Activated B cell treated with CpG ODN at 0.5 μM for 24 hours (primary cell): ENCODE measurements at regions of chr12 and their contacts with region 1.

Region 1: GRCh38 chr12:4148418-4149056 is 125.0 kb upstream of the CCND2 start:
- DNase-seq: peak; percentile 80
- ATAC-seq: peak; percentile 83
- H3K4me3 Mint-ChIP-seq: peak overlapping the region; percentile 75
- H3K27ac Mint-ChIP-seq: peak overlapping the region; percentile 92
- H3K4me1 Mint-ChIP-seq: peaks cover 95% of the 10 kb centered on the region
- H3K27me3 Mint-ChIP-seq: no peaks in the 10 kb centered on the region
- CTCF ChIP-seq: no peak

Region 2: GRCh38 chr12:2924019-2924418 is 1224.5 kb before region 1 on chr12:
- CTCF ChIA-PET with region 1: no interaction called
- POLR2A ChIA-PET with region 1: no interaction called
- intact Hi-C with region 1: no loop called
- DNase-seq: no peak
- ATAC-seq: no peak
- H3K4me3 Mint-ChIP-seq: no peak overlapping the region
- H3K27ac Mint-ChIP-seq: no peak overlapping the region
- H3K4me1 Mint-ChIP-seq: no peaks in the 10 kb centered on the region
- H3K27me3 Mint-ChIP-seq: no peaks in the 10 kb centered on the region
- CTCF ChIP-seq: no peak

Region 3: DNA sequence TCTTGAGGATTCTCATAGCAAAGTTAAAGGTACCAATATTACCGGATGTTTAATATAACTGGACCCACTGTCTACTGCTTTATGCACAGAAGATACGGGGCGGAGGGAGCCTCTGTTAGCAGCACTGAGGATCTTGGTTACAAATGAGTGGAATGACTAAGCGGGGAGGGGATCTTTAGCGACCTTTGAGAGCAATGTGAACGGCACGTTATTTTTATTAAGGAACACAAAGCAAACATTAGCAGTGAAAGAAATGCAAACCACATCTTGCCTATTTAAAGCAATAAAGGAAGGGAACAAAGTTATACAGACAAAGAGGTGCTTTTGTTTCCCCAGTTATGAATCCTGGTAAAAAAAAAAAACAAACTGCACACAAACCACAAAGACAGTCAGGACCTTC is 684.6 kb before region 1 on chr12:
- CTCF ChIA-PET with region 1: no interaction called
- POLR2A ChIA-PET with region 1: no interaction called
- intact Hi-C with region 1: no loop called
- DNase-seq: no peak
- ATAC-seq: no peak
- H3K4me3 Mint-ChIP-seq: no peak overlapping the region
- H3K27ac Mint-ChIP-seq: no peak overlapping the region
- H3K4me1 Mint-ChIP-seq: no peaks in the 10 kb centered on the region
- H3K27me3 Mint-ChIP-seq: peaks cover 20% of the 10 kb centered on the region
- CTCF ChIP-seq: no peak

Region 4: GRCh38 chr12:4118017-4118510 is 30.5 kb before region 1 on chr12:
- CTCF ChIA-PET with region 1: interaction called, 4 read pairs
- POLR2A ChIA-PET with region 1: interaction called, 45 read pairs
- intact Hi-C with region 1: loop called (anchors 1 kb)
- DNase-seq: no peak
- ATAC-seq: peak; percentile 80
- H3K4me3 Mint-ChIP-seq: peak overlapping the region; percentile 69
- H3K27ac Mint-ChIP-seq: peak overlapping the region; percentile 81
- H3K4me1 Mint-ChIP-seq: peaks cover 56% of the 10 kb centered on the region
- H3K27me3 Mint-ChIP-seq: no peaks in the 10 kb centered on the region
- CTCF ChIP-seq: no peak

Region 5: DNA sequence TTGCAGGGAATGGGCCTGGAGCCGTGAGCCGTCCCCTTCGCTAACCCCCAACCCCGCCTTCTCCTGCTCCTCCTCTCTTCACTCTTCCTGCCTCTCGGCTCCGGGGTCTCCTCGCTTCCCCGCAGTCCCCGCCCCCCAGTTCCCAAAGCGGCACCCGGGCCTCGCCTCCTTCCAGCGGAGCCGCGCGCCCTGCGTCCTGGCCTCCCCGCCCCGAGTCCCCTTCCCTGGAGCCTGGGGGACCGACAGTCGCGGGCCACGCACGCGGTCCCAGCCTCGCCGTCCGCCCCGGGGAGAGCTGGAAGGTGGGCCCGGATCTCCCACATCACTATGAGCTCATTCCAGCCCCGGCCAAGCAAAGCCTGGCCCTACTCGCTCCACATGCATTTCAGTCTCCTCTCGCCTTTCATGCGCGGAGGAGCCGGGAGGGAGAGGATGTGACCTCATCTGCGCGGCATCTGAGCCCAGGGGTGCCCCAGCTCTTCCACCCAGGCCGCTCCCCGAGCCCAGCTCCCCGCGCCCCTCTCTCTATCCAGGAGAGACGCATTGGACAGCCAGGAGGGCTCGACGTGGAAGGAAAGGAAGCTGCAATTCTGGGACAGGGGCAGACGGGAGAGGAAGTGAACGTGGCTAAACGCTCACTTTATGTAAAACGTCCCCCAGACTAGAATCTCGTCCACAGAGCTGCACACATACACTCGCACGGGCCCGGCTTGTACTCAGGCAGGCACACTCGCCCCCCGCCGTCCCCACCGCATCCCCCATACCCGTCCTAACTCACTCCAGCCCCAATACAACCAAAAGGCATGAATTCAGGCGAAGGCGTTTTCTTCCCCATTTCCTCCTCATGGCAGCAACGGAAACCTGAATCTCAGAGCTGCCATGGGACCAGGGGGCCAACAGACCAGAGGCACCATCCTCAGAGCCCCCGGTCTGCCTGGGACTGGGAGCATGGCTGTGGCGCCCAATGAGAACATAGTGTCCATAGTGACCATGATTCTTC is 16.3 kb after region 1 on chr12:
- CTCF ChIA-PET with region 1: interaction called, 4 read pairs
- POLR2A ChIA-PET with region 1: interaction called, 114 read pairs
- intact Hi-C with region 1: loop called (anchors 1 kb)
- DNase-seq: peak; percentile 60
- ATAC-seq: peak; percentile 75
- H3K4me3 Mint-ChIP-seq: peak overlapping the region; percentile 89
- H3K27ac Mint-ChIP-seq: peak overlapping the region; percentile 95
- H3K4me1 Mint-ChIP-seq: peaks cover 42% of the 10 kb centered on the region
- H3K27me3 Mint-ChIP-seq: no peaks in the 10 kb centered on the region
- CTCF ChIP-seq: no peak

Region 6: DNA sequence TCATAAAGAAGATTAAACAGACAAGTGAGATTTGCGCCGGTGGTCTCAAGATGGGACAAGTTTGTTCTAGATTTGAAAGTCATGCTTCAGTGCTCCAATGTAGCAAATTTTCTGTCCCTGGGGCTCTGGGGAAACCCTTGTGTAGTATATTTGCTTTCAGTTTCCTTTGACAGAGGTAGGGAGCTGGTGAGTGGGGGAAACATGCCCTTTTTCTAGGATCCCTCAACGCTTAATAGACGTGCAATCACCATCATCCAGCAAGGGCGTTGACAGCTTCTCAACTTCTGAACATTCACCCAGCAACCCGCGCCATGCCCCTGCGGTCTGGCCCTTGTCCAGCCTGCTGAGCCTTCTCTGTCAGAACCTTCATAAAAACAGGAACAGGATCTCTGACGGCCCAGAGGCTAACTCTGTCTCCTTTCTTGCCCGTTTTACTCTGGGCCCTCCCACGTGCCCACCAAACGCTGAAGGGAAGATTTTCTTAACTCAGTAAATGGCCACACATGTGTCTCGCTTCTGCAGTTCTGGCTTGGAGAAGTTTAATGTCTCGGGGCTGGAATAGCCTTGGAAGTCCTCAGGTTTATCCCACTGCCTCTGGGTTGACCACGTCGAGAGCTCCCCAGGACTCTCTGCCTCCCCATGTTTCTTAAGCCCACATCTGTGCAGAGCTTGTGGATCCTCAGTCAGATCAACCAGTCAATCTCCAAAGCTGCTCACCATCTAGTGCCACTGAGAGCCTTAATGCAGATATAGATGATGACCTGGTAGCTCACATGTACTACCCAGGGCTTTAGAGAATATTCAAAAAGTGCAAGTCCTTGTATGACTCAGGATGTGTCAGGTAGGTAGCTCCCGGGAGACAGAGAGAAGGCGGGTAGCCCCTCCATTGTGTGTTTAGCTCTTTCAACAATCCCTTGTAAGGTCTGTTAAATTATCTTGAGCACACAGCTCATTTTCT is 67.0 kb after region 1 on chr12:
- CTCF ChIA-PET with region 1: interaction called, 4 read pairs
- POLR2A ChIA-PET with region 1: interaction called, 42 read pairs
- intact Hi-C with region 1: loop called (anchors 1 kb)
- DNase-seq: peak; percentile 60
- ATAC-seq: peak; percentile 83
- H3K4me3 Mint-ChIP-seq: peak overlapping the region; percentile 80
- H3K27ac Mint-ChIP-seq: peak overlapping the region; percentile 93
- H3K4me1 Mint-ChIP-seq: peaks cover 49% of the 10 kb centered on the region
- H3K27me3 Mint-ChIP-seq: no peaks in the 10 kb centered on the region
- CTCF ChIP-seq: no peak

Region 7: DNA sequence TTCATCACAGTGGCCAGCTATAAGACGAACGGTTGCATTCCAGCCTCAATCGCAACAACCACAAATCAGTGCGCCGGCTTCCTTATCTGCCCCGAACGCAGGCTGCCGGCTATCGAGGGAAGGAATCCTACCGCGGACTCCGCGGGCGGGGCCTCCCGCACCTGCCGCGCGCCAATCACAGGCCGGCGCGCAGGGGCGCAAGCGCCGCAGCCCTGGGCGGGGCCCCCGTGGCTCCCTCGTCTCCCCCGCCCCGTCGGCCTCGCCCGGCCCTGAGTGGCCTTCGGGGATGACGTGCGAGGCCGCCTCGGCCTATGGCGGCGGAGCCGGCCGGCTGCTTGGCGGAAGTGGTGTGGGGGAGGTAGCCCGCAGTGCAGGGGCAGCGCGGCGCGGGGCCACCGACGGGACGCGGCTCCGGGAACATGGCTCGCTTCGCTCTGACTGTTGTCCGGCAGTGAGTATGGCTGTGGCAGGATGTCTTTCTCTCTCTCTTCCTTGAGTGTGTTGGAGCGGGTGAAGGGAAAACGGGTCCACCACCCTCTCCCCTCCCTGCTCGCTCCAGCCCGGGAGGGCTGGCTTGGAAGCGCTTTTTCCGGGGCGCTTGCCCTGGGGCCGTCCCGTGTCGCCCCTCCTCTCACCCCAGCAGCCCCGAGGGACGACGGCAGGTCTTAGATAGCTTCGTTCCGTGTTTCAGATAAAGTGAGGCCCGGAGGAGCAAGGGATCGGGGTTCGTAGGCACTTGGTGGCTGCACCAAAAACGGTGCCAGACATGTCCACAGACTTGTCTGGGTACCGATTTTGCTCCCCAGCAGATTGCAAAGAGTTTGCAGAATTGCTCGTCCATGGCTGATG is 172.5 kb after region 1 on chr12 and contains the start of gene TIGAR:
- CTCF ChIA-PET with region 1: no interaction called
- POLR2A ChIA-PET with region 1: no interaction called
- intact Hi-C with region 1: loop called (anchors 5 kb)
- DNase-seq: peak; percentile 94
- ATAC-seq: peak; percentile 97
- H3K4me3 Mint-ChIP-seq: peak within 1 kb of the TSS; percentile 95
- H3K27ac Mint-ChIP-seq: peak within 1 kb of the TSS; percentile 92
- H3K4me1 Mint-ChIP-seq: peaks cover 34% of the 10 kb centered on the region
- H3K27me3 Mint-ChIP-seq: no peaks in the 10 kb centered on the region
- CTCF ChIP-seq: no peak
- total RNA-seq, gene TIGAR: 10.0 and 10.2 TPM in 2 replicates